ENCODE measurements at regions of chr14 and their contacts with region 1.

Region 1: GRCh38 chr14:66359500-66359899 is 126.7 kb upstream of the CCDC196 start:
- DNase-seq: peak; percentile 70
- ATAC-seq: peak; percentile 34
- H3K4me3 ChIP-seq: no peak overlapping the region
- H3K27ac ChIP-seq: no peak overlapping the region
- H3K4me1 ChIP-seq: no peaks in the 10 kb centered on the region
- H3K27me3 ChIP-seq: peaks cover 40% of the 10 kb centered on the region
- CTCF ChIP-seq: peak; percentile 84

Region 2: GRCh38 chr14:66117585-66117984 is 241.9 kb before region 1 on chr14:
- CTCF ChIA-PET with region 1: no interaction called
- POLR2A ChIA-PET with region 1: no interaction called
- intact Hi-C with region 1: no loop called
- DNase-seq: peak; percentile 84
- ATAC-seq: peak; percentile 98
- H3K4me3 ChIP-seq: no peak overlapping the region
- H3K27ac ChIP-seq: no peak overlapping the region
- H3K4me1 ChIP-seq: peaks cover 14% of the 10 kb centered on the region
- H3K27me3 ChIP-seq: peaks cover 11% of the 10 kb centered on the region
- CTCF ChIP-seq: no peak

Region 3: GRCh38 chr14:66268802-66269334 is 90.6 kb before region 1 on chr14:
- CTCF ChIA-PET with region 1: no interaction called
- POLR2A ChIA-PET with region 1: no interaction called
- intact Hi-C with region 1: no loop called
- DNase-seq: no peak
- ATAC-seq: no peak
- H3K4me3 ChIP-seq: no peak overlapping the region
- H3K27ac ChIP-seq: no peak overlapping the region
- H3K4me1 ChIP-seq: no peaks in the 10 kb centered on the region
- H3K27me3 ChIP-seq: peaks cover 19% of the 10 kb centered on the region; the same call in 1 of the 2 replicates
- CTCF ChIP-seq: no peak

Region 4: DNA sequence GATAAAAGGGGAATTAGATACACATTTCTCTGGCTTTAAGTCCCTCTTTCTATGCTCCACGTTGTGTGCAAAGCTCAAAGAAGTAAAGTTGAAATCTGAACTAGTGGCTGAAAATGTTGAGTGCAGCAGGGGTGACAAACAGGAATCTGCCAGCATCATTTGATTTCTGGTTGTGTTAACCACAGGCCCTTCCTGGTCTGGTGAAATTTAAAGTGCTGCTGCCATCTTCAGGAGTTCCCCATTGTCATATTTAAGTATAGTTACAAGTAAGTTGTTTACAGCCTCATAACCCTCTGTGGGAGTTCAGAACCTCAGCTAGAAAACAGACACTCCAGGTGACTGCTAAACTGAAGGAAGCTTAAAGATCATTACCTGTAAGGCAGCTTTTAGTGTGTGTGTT is 35.8 kb after region 1 on chr14:
- CTCF ChIA-PET with region 1: interaction called, 17 read pairs
- POLR2A ChIA-PET with region 1: no interaction called
- intact Hi-C with region 1: no loop called
- DNase-seq: peak; percentile 16
- ATAC-seq: peak; percentile 63
- H3K4me3 ChIP-seq: no peak overlapping the region
- H3K27ac ChIP-seq: no peak overlapping the region
- H3K4me1 ChIP-seq: no peaks in the 10 kb centered on the region
- H3K27me3 ChIP-seq: peaks cover 5% of the 10 kb centered on the region
- CTCF ChIP-seq: peak; percentile 21; the same call in 1 of the 2 replicates

Region 5: GRCh38 chr14:67137744-67138371 is 778.4 kb after region 1 on chr14:
- CTCF ChIA-PET with region 1: interaction called, 7 read pairs
- POLR2A ChIA-PET with region 1: no interaction called
- intact Hi-C with region 1: loop called (anchors 5 kb)
- DNase-seq: peak; percentile 53
- ATAC-seq: peak; percentile 65; the same call in 1 of the 2 replicates
- H3K4me3 ChIP-seq: no peak overlapping the region
- H3K27ac ChIP-seq: no peak overlapping the region
- H3K4me1 ChIP-seq: no peaks in the 10 kb centered on the region
- H3K27me3 ChIP-seq: no peaks in the 10 kb centered on the region
- CTCF ChIP-seq: peak; percentile 64